Mammary epithelial cell (primary cell): ENCODE measurements at regions of chr1 and their contacts with region 1.

Region 1: DNA sequence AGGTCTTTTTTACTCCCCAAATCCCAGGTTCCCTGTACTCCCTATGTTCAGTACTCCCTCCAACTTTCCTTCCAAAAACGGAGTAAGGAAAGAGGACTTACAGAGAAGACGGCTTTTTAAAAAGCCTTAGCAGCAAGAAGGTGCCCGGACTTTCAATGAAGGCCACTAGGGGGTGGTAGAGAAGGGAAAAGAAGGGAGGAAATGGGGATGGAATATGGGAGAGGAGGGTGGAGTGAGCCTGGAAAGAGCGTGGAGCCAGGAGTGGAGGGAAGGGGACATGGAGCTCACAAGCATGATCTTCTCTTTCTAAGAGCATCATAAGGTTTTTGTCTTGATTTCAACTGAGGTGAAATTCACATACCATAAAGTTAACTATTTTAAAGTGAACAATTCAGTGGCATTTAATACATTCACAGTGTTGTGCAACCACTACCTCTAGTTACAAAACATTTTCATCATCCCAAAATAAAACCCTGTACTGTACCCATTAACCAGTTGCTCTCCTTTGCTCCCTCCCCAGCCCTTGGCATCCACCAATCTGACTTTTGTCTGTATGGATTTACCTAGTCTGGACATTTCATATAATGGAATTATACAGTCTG is 129.9 kb downstream of the ZNF281 start:
- DNase-seq: peak; percentile 53
- H3K4me3 ChIP-seq: no peak overlapping the region
- H3K27ac ChIP-seq: no peak overlapping the region
- H3K4me1 ChIP-seq: no peaks in the 10 kb centered on the region
- H3K27me3 ChIP-seq: no peaks in the 10 kb centered on the region
- CTCF ChIP-seq: peak; percentile 78

Region 2: DNA sequence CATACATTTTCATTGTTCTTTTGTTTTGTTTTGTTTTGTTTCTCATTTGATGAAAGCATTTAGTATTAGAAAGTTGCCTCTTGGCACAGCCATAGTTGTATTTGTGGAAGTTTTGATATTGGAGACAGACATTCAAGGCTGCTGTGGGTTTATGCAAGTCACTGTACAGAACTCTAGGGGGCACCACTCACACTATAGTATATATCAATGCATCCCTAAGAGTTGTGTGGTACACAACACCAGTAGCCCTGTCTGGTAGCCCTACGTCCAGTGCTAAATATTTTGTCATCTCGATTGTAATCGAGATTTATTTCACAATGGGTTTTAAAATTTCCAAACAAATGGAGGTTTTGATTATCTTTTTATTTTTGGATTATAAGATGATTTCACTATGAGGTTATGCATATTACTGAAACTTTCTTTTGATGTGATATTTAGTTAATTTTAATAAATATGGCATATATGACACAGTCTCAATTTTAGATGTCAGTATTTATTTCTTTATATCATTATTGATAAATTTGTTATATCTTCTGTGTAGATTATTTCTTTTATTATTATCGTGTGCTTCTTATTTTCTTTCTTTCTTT is 140.2 kb before region 1 on chr1:
- CTCF ChIA-PET with region 1: no interaction called
- dilution Hi-C with region 1: no loop called
- in situ Hi-C with region 1: no loop called
- intact Hi-C with region 1: loop called (anchors 1 kb)
- DNase-seq: peak; percentile 32
- H3K4me3 ChIP-seq: no peak overlapping the region
- H3K27ac ChIP-seq: no peak overlapping the region
- H3K4me1 ChIP-seq: no peaks in the 10 kb centered on the region
- H3K27me3 ChIP-seq: no peaks in the 10 kb centered on the region
- CTCF ChIP-seq: peak; percentile 72 to 78

Region 3: GRCh38 chr1:200351826-200352549 is 72.1 kb after region 1 on chr1:
- CTCF ChIA-PET with region 1: no interaction called
- dilution Hi-C with region 1: loop called (anchors 5 kb)
- in situ Hi-C with region 1: no loop called
- intact Hi-C with region 1: no loop called
- DNase-seq: peak; percentile 55
- H3K4me3 ChIP-seq: no peak overlapping the region
- H3K27ac ChIP-seq: no peak overlapping the region
- H3K4me1 ChIP-seq: peaks cover 6% of the 10 kb centered on the region
- H3K27me3 ChIP-seq: no peaks in the 10 kb centered on the region
- CTCF ChIP-seq: no peak